K562 (cell line): ENCODE measurements at regions of chr14 and their contacts with region 1.

Region 1: GRCh38 chr14:35826218-35826951 is at the start of gene BRMS1L:
- DNase-seq: peak; percentile 92 to 96 (median 94)
- ATAC-seq: peak; percentile 99
- H3K4me3 ChIP-seq: peak within 1 kb of the TSS; percentile 78
- H3K27ac ChIP-seq: peak within 1 kb of the TSS; percentile 90
- H3K4me1 ChIP-seq: peaks cover 3 to 6% of the 10 kb centered on the region in 2 experiments; a peak in 2 of 5 replicates
- H3K27me3 ChIP-seq: no peaks in the 10 kb centered on the region
- CTCF ChIP-seq: peak in 1 of 3 experiments; percentile 9; a peak in 2 of 6 replicates
- EP300 ChIP-seq: no peak
- POLR2A ChIP-seq: peak; percentile 94
- RAD21 ChIP-seq: no peak
- polyA plus RNA-seq, gene BRMS1L: 1.4 to 2.0 TPM

Region 2: DNA sequence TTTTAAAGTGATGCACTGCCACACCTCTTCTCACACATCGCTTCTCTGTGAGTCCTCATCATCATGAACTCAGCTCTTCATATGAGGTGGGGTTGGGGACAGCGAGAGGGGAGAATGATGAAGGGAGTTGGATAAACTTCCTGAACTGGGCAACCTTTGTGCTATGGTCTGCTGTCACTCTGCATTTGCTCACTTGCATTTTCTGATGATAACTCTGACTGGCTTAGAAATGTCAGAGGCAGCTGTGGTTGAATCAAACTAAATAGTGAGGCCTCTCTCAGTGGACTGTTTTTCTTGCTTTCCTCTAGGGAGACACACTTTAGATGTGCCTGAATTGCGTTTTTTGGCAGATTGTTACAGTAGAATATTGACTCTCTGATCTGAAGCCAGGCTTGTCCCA is 366.6 kb before region 1 on chr14:
- CTCF ChIA-PET with region 1: no interaction called
- POLR2A ChIA-PET with region 1: no interaction called
- in situ Hi-C with region 1: no loop called
- intact Hi-C with region 1: no loop called
- DNase-seq: no peak
- ATAC-seq: no peak
- H3K4me3 ChIP-seq: no peak overlapping the region
- H3K27ac ChIP-seq: no peak overlapping the region
- H3K4me1 ChIP-seq: no peaks in the 10 kb centered on the region
- H3K27me3 ChIP-seq: no peaks in the 10 kb centered on the region
- CTCF ChIP-seq: no peak
- EP300 ChIP-seq: no peak
- POLR2A ChIP-seq: no peak
- RAD21 ChIP-seq: no peak

Region 3: DNA sequence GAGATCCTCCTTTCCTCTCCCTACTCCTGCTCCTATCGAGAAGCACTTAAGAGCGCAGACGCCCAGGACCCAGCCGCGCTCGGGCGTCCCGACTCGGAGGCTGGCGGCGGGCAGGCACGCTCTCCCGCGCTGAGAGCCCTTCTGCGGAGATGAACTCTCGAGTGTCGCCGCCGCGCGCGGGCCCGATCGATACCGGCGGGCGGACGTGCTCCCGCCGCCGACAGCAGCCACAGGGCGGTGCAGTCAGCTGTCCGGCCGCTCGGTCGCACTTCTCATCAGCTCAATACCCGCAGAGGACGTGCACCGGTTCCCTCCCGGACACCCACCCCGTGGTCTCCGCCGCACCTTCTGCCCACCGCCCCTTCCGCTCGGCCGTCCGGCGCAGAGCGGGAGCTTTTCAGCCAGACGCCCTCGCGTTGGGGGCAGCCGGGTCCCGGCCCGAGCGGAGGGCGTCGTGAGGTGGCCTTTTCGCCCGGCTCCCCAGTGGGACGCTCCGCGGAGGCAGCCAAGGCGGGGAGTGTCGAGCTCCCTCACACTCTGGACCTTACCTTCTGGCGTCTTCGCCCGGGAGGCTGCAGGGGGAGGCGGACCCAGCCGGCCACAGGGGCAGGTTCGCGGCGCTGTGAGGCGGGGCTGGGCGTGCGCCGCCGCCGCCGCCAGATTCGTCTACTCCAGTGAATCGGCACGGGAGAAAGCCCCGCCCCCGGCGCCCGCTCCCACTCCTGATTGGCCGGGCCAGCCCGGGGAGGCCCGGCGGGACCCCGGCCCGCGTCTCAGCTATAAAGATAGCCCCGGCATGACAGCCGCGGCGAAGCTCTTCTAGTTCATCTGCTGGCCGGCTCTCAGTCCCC is 292.8 kb before region 1 on chr14 and contains the start of gene INSM2:
- CTCF ChIA-PET with region 1: no interaction called
- POLR2A ChIA-PET with region 1: no interaction called
- in situ Hi-C with region 1: no loop called
- intact Hi-C with region 1: loop called (anchors 10 kb)
- DNase-seq: peak; percentile 62 to 69 (median 66)
- ATAC-seq: peak; percentile 89
- H3K4me3 ChIP-seq: peak within 1 kb of the TSS; percentile 41
- H3K27ac ChIP-seq: no peak within 1 kb of the TSS
- H3K4me1 ChIP-seq: peaks cover 0 to 28% of the 10 kb centered on the region in 2 experiments; a peak in 2 of 5 replicates
- H3K27me3 ChIP-seq: peaks cover 7 to 18% of the 10 kb centered on the region in 2 experiments; a peak in 4 of 5 replicates
- CTCF ChIP-seq: 0 out of 6 replicates have a peak, but pooled peaks of 1 of the 3 experiments have one; percentile 1
- EP300 ChIP-seq: no peak
- POLR2A ChIP-seq: no peak
- RAD21 ChIP-seq: no peak
- polyA plus RNA-seq, gene INSM2: not detected

Region 4: GRCh38 chr14:37172024-37172869 is 1345.9 kb after region 1 on chr14 and contains the start of gene SLC25A21:
- CTCF ChIA-PET with region 1: no interaction called
- POLR2A ChIA-PET with region 1: no interaction called
- in situ Hi-C with region 1: loop called (anchors 25 kb)
- intact Hi-C with region 1: no loop called
- DNase-seq: peak; percentile 51 to 87 (median 58)
- ATAC-seq: peak; percentile 74
- H3K4me3 ChIP-seq: peak within 1 kb of the TSS; percentile 75
- H3K27ac ChIP-seq: peak within 1 kb of the TSS; percentile 94
- H3K4me1 ChIP-seq: peaks cover 11 to 33% of the 10 kb centered on the region in 2 experiments
- H3K27me3 ChIP-seq: no peaks in the 10 kb centered on the region
- CTCF ChIP-seq: 0 out of 6 replicates have a peak, but pooled peaks of 1 of the 3 experiments have one; percentile 6
- EP300 ChIP-seq: peak; percentile 34; the same call in 1 of the 2 replicates
- POLR2A ChIP-seq: peak; percentile 85
- RAD21 ChIP-seq: no peak
- polyA plus RNA-seq, gene SLC25A21: 44.6 to 46.7 TPM